Right ventricle myocardium superior (tissue), 1 donor: ENCODE measurements at regions of chr1 and their contacts with region 1.

Region 1: DNA sequence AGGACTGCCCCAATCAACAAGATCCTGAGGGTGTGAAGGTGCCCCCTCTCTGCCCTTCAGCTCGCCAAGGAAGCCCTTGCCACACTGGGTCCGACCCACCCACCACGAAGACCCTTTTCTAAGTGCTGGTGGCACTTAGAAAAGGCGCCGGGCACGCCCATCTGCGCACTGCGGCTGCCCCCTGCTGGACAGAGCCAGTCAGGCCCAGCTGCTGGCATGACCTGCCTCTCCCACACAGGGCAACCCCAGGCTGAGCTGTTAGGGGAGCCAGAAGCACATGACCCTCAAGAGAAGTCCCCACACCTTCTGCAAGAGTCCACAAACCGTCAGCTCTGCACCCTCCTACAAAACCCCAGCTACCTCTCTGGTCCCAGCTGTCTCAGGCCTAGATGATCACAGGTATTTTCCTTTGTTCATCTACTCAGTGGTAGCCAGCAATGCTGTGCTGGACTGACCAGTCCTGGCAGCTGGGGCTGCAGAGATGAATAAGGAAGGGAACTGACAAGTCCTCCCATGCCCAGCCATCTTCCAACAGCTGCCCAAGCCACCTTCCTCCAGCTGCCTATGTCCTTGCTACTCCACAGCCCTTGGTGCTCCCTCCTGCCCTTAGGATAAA is 40.0 kb upstream of the ZC3H12A start:
- DNase-seq: peak; percentile 84
- ATAC-seq: peak; percentile 85

Region 2: GRCh38 chr1:36553591-36554322 is 880.6 kb before region 1 on chr1:
- intact Hi-C with region 1: loop called (anchors 10 kb)
- DNase-seq: peak; percentile 71
- ATAC-seq: peak; percentile 75

Region 3: GRCh38 chr1:36703526-36704208 is 730.7 kb before region 1 on chr1:
- intact Hi-C with region 1: loop called (anchors 5 kb)
- DNase-seq: peak; percentile 80
- ATAC-seq: peak; percentile 91

Region 4: GRCh38 chr1:37561133-37562132 is 127.0 kb after region 1 on chr1:
- intact Hi-C with region 1: no loop called
- DNase-seq: no peak
- ATAC-seq: no peak

Region 5: GRCh38 chr1:38088366-38088765 is 654.0 kb after region 1 on chr1:
- intact Hi-C with region 1: no loop called
- DNase-seq: no peak
- ATAC-seq: no peak